ENCODE measurements at regions of chr10 and their contacts with region 1.

Region 1: DNA sequence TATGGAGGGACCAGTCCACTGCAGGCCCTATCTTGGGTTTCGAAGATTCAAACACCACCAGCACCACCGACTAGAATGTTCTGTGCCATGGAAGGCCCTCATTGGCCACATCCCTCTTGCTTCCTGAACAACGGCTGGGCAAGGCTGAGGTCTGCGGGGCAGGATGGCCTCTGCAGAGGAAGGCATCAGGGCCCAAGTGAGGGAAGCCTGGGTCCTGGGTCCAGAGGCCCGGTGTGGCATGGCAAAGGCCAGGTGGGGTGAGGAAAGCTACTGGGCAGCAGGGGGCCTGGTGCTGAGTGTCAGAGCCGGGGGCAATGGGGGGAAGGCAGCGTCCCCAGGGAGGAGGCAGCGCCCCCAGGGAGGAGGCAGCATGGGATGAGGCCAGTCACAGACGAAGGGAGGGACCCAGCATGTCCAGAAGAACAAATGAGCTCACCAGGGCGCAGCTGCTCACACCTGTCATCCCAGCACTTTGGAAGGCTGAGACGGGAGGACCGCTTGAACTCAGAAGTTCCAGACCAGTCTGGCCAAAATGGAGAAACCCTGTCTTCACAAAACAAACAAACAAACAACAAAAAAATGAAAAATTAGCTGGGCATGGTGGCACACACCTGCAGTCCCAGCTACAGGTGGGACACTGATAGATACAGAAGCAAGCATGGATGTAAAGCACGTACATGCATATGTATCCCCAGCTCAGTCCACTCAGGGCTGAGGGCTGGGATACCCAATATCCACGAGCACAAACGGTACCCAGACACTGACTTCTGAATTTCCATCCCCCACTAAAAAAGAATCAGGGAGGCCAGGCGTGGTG is 64.5 kb downstream of the PROSER2 start:
- DNase-seq: no peak
- ATAC-seq: no peak
- H3K4me3 ChIP-seq: no peak overlapping the region
- H3K4me3 Mint-ChIP-seq: no peak overlapping the region
- H3K27ac ChIP-seq: no peak overlapping the region
- H3K27ac Mint-ChIP-seq: no peak overlapping the region
- H3K4me1 ChIP-seq: peaks cover 0 to 6% of the 10 kb centered on the region in 2 donors
- H3K4me1 Mint-ChIP-seq: no peaks in the 10 kb centered on the region
- H3K27me3 ChIP-seq: no peaks in the 10 kb centered on the region
- H3K27me3 Mint-ChIP-seq: no peaks in the 10 kb centered on the region
- CTCF ChIP-seq: no peak

Region 2: GRCh38 chr10:11863353-11864109 is 24.1 kb before region 1 on chr10:
- CTCF ChIA-PET with region 1: no interaction called
- POLR2A ChIA-PET with region 1: no interaction called
- intact Hi-C with region 1: loop called (anchors 1 kb)
- DNase-seq: peak; percentile 46
- ATAC-seq: peak; percentile 70
- H3K4me3 ChIP-seq: peak overlapping the region in 4 of 5 experiments; percentile 11 to 53 (median 18)
- H3K4me3 Mint-ChIP-seq: peak overlapping the region; percentile 66
- H3K27ac ChIP-seq: peak overlapping the region in 1 of 2 donors; percentile 15
- H3K27ac Mint-ChIP-seq: no peak overlapping the region
- H3K4me1 ChIP-seq: peaks cover 9 to 13% of the 10 kb centered on the region in 2 donors
- H3K4me1 Mint-ChIP-seq: peaks cover 16% of the 10 kb centered on the region
- H3K27me3 ChIP-seq: no peaks in the 10 kb centered on the region
- H3K27me3 Mint-ChIP-seq: no peaks in the 10 kb centered on the region
- CTCF ChIP-seq: no peak

Measured in B cell (primary cell).